ENCODE measurements at regions of chr13 and their contacts with region 1.

Region 1: DNA sequence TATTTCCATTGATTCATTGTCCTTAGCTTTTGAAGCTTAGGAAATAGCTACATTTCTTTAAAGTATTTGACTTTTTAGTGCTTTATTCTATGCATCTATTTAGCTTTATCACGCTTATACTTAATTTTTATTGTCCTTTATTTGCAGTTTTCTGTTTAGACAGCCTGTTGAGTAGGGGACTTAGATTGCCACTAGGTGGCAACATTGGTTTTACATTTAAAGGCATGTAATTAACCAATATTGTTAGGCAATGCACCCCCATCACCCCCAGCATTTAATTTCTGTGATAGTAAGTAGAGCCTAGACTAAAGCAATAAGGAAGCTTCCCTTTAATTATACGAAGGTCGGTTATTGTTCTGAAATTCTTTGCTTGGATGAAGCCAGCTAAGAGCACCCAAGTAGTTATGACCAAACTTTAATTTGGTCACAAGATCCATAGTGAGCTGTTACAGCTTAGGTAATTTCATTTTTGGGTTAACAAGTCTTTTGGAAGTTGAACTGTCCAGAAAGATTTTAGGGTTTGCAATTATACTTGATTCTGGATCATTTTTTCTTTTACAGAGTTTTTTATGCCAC is 36.5 kb downstream of the B3GLCT start:
- DNase-seq: peak in 1 of 4 donors; percentile 49
- ATAC-seq: peak; percentile 62
- H3K4me3 ChIP-seq: no peak overlapping the region
- H3K27ac ChIP-seq: no peak overlapping the region
- H3K4me1 ChIP-seq: no peaks in the 10 kb centered on the region
- H3K27me3 ChIP-seq: no peaks in the 10 kb centered on the region
- CTCF ChIP-seq: peak; percentile 52 to 55

Region 2: DNA sequence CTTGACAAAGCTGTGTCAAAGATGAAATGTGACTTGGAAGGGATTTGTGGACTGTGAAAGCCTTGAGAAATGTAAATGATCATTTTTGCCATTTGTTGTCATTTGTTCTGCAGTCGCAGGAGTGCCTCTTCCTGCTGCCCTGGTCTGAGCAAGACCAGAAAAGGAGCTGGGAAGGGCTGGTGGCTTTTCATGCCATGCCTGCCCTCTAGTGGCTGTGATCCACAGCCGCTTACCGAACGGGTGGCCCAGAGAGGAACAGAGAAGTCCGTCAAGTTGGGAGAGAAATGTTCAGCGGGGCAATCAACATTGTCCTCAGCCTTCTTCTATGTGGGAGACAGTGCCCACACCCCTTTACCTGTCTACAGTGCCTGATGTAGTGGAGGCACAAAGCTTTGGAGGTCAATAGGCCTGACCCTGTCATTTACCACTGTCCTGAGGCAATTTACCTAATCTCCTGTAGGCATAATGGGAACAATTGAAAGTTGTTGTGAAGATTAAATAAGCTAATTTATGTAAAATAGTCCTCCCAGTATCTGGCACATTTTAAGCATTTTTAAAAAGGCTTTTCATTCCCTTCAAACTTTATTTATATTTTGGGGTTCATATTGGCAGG is 187.9 kb after region 1 on chr13:
- intact Hi-C with region 1: loop called in 1 of 2 experiments (anchors 5 kb)
- DNase-seq: peak; percentile 53 to 85 (median 76)
- ATAC-seq: peak; percentile 100
- H3K4me3 ChIP-seq: no peak overlapping the region
- H3K27ac ChIP-seq: no peak overlapping the region
- H3K4me1 ChIP-seq: peaks cover 0 to 3% of the 10 kb centered on the region in 2 donors
- H3K27me3 ChIP-seq: no peaks in the 10 kb centered on the region
- CTCF ChIP-seq: peak; percentile 76 to 79